ENCODE measurements at regions of chr1 and their contacts with region 1.

Region 1: DNA sequence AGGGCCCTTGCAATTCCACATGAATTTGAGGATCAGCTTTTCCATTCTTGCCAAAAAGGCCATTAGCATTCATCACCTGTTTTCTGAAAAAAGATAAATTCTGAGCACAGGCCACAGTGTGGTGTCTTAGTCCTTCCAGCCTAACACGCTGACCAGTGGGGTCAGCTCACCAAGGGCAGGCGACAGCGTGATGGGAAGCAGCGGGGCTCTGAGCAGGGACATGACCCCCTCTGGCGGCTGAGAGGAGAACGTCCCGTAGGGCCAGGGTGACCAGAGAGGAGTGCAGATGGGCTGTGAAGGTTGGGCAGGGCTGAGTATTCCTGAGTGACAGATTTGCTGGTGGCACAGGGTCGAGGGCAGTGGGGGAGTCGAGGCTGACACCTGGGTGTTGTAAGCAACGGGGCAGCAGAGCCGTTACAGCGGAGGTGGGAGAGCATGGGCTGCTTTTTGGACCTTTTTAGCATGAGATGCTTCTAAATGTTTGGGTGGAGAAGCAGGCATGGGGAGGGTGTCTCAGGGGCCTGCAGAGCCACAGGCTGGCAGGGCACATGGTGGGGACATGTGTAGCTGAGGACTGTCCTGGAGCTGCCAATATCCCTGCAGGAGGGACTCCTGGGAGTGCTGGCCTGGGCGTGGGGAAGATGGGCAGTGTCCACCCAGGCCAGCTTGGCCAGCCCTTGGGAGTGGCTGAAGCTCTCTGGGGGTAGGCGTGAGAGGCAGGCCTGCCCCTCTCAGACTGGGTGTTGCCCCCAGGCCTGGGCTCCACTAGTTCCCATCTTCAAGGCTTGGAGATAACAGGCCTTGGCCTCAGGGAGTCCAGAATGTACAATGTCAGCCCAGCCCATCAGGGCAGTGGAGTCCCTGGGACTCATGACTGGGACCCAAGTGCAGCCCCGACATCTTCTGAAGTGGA is 8.6 kb upstream of the CALML6 start:
- H3K4me3 Mint-ChIP-seq: no peak overlapping the region
- H3K27ac Mint-ChIP-seq: no peak overlapping the region
- H3K4me1 Mint-ChIP-seq: peaks cover 19% of the 10 kb centered on the region
- H3K27me3 Mint-ChIP-seq: peaks cover 14% of the 10 kb centered on the region

Region 2: GRCh38 chr1:1777950-1778662 is 128.3 kb before region 1 on chr1 and contains the start of gene NADK:
- intact Hi-C with region 1: loop called (anchors 5 kb)
- H3K4me3 Mint-ChIP-seq: peak within 1 kb of the TSS; percentile 84
- H3K27ac Mint-ChIP-seq: peak within 1 kb of the TSS; percentile 96
- H3K4me1 Mint-ChIP-seq: peaks cover 81% of the 10 kb centered on the region
- H3K27me3 Mint-ChIP-seq: no peaks in the 10 kb centered on the region

Region 3: GRCh38 chr1:1919304-1920056 is 13.0 kb after region 1 on chr1:
- intact Hi-C with region 1: loop called (anchors 1 kb)
- H3K4me3 Mint-ChIP-seq: peak overlapping the region; percentile 70
- H3K27ac Mint-ChIP-seq: peak overlapping the region; percentile 24
- H3K4me1 Mint-ChIP-seq: peaks cover 16% of the 10 kb centered on the region
- H3K27me3 Mint-ChIP-seq: peaks cover 32% of the 10 kb centered on the region

Region 4: GRCh38 chr1:1996207-1996651 is 89.8 kb after region 1 on chr1:
- intact Hi-C with region 1: no loop called
- H3K4me3 Mint-ChIP-seq: no peak overlapping the region
- H3K27ac Mint-ChIP-seq: peak overlapping the region; percentile 82
- H3K4me1 Mint-ChIP-seq: peaks cover 29% of the 10 kb centered on the region
- H3K27me3 Mint-ChIP-seq: peaks cover 12% of the 10 kb centered on the region

Measured in dendritic cell treated with granulocyte-macrophage colony-stimulating factor and Interleukin-4, amounts not matched to agents 40 ng/mL and 50 ng/mL, for 4 days (primary cell).